K562 (cell line): ENCODE measurements at regions of chr2 and their contacts with region 1.

Region 1: GRCh38 chr2:68244456-68244855 is 7.9 kb downstream of the PPP3R1 start:
- DNase-seq: no peak
- ATAC-seq: no peak
- H3K4me3 ChIP-seq: no peak overlapping the region
- H3K27ac ChIP-seq: no peak overlapping the region
- H3K4me1 ChIP-seq: peaks cover 7 to 37% of the 10 kb centered on the region in 2 experiments; a peak in 4 of 5 replicates
- H3K27me3 ChIP-seq: no peaks in the 10 kb centered on the region
- CTCF ChIP-seq: peak in 2 of 3 experiments; percentile 18 to 33; a peak in 2 of 6 replicates
- EP300 ChIP-seq: no peak
- POLR2A ChIP-seq: no peak
- RAD21 ChIP-seq: peak; percentile 19 to 50; a peak in 3 of 4 replicates

Region 2: GRCh38 chr2:68141875-68142274 is 102.6 kb before region 1 on chr2:
- CTCF ChIA-PET with region 1: no interaction called
- POLR2A ChIA-PET with region 1: no interaction called
- in situ Hi-C with region 1: no loop called
- intact Hi-C with region 1: no loop called
- DNase-seq: no peak
- ATAC-seq: no peak
- H3K4me3 ChIP-seq: no peak overlapping the region
- H3K27ac ChIP-seq: no peak overlapping the region
- H3K4me1 ChIP-seq: peaks cover 0 to 3% of the 10 kb centered on the region in 2 experiments; a peak in 1 of 5 replicates
- H3K27me3 ChIP-seq: no peaks in the 10 kb centered on the region
- CTCF ChIP-seq: no peak
- EP300 ChIP-seq: no peak
- POLR2A ChIP-seq: no peak
- RAD21 ChIP-seq: no peak

Region 3: DNA sequence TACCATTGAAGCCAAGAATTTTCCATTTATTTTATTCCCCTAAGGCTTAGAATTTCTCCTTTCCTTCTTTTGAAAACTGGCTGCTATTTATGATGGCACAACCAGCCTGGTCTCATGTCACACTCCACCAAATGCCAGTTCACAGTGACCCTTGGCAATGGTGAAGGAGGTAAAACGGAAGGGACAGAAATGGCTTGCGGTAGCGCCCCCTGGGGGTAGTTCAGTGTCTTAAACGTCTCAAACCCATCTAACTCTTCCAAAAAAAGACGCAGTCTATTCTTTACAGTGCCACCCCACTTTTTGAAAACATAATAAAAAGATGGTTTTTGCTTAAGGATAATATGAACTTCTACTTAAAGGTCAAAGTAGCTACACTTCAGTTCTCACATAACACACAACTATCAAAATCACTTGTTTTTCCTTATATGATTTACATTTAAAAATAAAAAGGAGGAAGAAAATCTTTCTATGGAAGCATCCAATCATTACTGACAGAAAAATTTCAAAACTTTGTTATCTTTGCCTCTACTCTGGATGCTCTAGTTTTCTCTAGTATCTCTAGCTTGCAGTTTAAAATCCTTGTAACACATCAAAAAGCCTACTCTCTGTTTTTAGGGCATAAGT is 58.8 kb before region 1 on chr2:
- CTCF ChIA-PET with region 1: no interaction called
- POLR2A ChIA-PET with region 1: no interaction called
- in situ Hi-C with region 1: no loop called
- intact Hi-C with region 1: loop called (anchors 10 kb)
- DNase-seq: peak; percentile 47 to 81 (median 54)
- ATAC-seq: peak; percentile 86
- H3K4me3 ChIP-seq: no peak overlapping the region
- H3K27ac ChIP-seq: no peak overlapping the region
- H3K4me1 ChIP-seq: no peaks in the 10 kb centered on the region; a peak in 1 of 5 replicates
- H3K27me3 ChIP-seq: no peaks in the 10 kb centered on the region
- CTCF ChIP-seq: peak; percentile 69 to 81 (median 76)
- EP300 ChIP-seq: no peak
- POLR2A ChIP-seq: no peak
- RAD21 ChIP-seq: peak in 1 of 2 experiments; percentile 43; a peak in 2 of 4 replicates

Region 4: DNA sequence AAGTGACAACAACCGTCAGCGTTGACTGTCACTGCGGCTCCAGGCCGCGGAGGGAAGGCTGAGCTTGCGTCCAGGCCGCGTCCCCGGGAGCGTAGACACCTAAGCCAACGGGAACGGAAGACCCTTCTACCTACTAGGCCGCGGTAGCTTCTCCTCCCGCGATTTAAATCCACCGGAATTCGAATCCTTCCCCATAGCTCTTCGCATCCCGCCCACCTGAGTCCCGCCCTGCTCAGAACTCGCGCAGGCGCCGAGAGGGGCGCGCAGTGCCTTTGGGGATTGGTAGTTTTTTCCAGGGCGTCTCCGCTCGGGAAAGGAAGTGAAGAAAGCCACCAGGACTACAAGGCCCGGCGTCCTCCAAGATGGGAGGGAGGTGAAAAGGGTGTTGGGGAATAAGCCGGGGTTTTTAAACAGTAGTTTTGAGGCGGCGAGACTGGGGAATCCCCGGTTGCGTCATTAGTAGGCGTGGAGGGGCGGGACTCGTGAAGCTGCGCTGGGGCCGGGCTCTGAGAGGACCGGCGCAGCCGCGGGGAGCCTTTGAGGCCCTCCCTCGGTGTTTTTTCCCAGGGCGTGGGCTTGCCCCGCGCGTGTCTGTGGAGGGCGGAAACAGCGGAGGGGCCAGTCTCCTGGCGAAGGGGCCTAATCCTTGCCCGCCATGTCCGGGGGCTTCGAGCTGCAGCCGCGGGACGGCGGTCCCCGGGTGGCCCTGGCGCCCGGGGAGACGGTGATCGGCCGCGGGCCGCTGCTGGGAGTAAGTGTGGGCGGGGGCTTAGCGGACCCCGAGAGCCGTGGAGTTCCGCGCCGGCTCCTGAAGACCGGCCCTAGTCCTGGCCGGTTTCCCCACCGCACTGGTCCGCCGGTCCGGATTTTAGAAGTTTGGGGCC is 222.9 kb after region 1 on chr2 and contains the starts of genes APLF and FBXO48:
- CTCF ChIA-PET with region 1: no interaction called
- POLR2A ChIA-PET with region 1: no interaction called
- in situ Hi-C with region 1: no loop called
- intact Hi-C with region 1: no loop called
- DNase-seq: peak; percentile 87 to 99 (median 92)
- ATAC-seq: peak; percentile 97
- H3K4me3 ChIP-seq: peak within 1 kb of the TSS; percentile 76
- H3K27ac ChIP-seq: peak within 1 kb of the TSS; percentile 85
- H3K4me1 ChIP-seq: peaks cover 8 to 30% of the 10 kb centered on the region in 2 experiments; a peak in 4 of 5 replicates
- H3K27me3 ChIP-seq: no peaks in the 10 kb centered on the region; a peak in 1 of 5 replicates
- CTCF ChIP-seq: no peak
- EP300 ChIP-seq: peak; percentile 13; the same call in 1 of the 2 replicates
- POLR2A ChIP-seq: peak; percentile 79
- RAD21 ChIP-seq: no peak
- polyA plus RNA-seq, gene APLF: 0.07 to 0.15 TPM
- polyA plus RNA-seq, gene FBXO48: 0.74 to 0.79 TPM